ENCODE measurements at regions of chr2 and their contacts with region 1.

Region 1: DNA sequence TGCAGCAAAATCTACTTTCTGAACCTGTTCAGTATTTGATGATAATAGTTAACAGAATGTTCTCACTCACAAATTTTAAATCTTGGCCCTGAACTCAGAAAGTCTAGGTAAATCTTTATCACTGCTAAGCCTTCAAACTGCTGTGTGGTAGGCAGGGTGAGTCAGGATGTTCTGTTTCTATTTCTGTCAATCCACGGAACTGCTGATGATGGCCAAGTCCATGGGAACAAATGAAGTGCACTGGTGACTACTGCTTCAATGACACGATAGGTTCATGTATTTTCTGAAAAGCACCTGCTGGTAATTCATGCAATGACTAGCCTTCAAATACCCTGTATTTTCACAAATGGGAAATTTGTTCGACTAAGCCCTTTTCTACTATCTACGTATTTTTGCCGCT is 14.2 kb downstream of the NIFK start:
- DNase-seq: peak; percentile 47
- H3K4me3 ChIP-seq: no peak overlapping the region
- H3K27me3 ChIP-seq: no peaks in the 10 kb centered on the region
- CTCF ChIP-seq: no peak

Region 2: DNA sequence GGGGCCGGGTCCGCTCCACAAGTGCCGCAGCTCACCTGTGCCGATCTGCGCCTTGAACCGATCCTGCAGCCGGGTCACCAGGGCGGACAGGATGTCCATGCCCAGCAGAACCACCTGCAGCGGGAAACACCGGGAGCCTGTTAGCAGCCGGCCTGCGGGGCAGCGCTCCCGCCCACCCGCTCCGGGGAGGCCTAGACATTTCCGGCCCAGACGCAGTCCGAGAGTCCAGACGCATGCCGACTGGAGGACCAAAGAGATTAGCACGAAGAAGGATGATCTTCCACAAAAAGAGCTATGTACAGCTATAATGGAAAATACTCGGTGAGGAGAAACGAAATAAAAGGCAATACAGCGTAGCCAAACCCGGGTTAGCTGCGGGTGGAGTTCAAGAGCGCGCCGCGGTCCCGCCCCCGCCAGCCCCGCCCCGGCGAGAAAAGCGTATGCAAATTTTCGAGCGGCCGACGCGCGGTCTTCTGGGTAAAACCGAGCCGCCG is 192.2 kb before region 1 on chr2:
- CTCF ChIA-PET with region 1: interaction called, 17 read pairs
- POLR2A ChIA-PET with region 1: interaction called, 5 read pairs
- DNase-seq: peak; percentile 11
- H3K4me3 ChIP-seq: peak overlapping the region; percentile 83
- H3K27me3 ChIP-seq: no peaks in the 10 kb centered on the region
- CTCF ChIP-seq: no peak

Region 3: GRCh38 chr2:121596221-121597080 is 126.0 kb before region 1 on chr2:
- CTCF ChIA-PET with region 1: interaction called, 14 read pairs
- POLR2A ChIA-PET with region 1: no interaction called
- DNase-seq: peak; percentile 19
- H3K4me3 ChIP-seq: peak overlapping the region; percentile 19
- H3K27me3 ChIP-seq: no peaks in the 10 kb centered on the region
- CTCF ChIP-seq: peak; percentile 61